ENCODE measurements at regions of chr11 and their contacts with region 1.

Region 1: GRCh38 chr11:4636962-4637661 is at the start of gene OR51D1:
- DNase-seq: peak; percentile 39 to 86 (median 69)
- H3K4me3 ChIP-seq: no peak within 1 kb of the TSS
- H3K27ac ChIP-seq: no peak within 1 kb of the TSS
- H3K4me1 ChIP-seq: no peaks in the 10 kb centered on the region
- H3K27me3 ChIP-seq: no peaks in the 10 kb centered on the region
- CTCF ChIP-seq: peak; percentile 57 to 88 (median 76)
- POLR2A ChIP-seq: no peak
- total RNA-seq, gene OR51D1: not detected

Region 2: GRCh38 chr11:3626308-3626951 is 1010.7 kb before region 1 on chr11:
- intact Hi-C with region 1: no loop called
- DNase-seq: peak; percentile 32 to 73 (median 64)
- H3K4me3 ChIP-seq: peak overlapping the region in 1 of 4 donors; percentile 15
- H3K27ac ChIP-seq: no peak overlapping the region
- H3K4me1 ChIP-seq: no peaks in the 10 kb centered on the region
- H3K27me3 ChIP-seq: no peaks in the 10 kb centered on the region
- CTCF ChIP-seq: no peak
- POLR2A ChIP-seq: no peak

Region 3: DNA sequence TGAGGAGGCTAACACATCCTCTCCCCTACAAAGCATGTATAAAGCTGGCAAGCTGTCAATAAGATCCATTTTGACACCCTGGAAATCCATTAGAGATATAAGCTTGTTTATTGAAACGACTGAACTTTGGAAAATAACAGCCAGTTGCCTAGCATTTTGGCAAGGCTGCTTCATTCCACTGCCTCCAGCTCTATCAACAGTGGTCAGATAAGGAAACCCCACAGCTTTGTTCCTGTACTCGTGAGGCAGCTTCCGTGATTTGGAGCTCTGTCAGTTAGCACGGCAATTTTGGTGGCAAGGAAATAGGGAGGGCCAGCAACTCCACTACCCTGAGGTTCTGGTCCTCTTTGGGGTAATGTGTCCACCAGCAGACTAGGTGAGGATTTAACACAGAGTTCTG is 213.9 kb after region 1 on chr11:
- intact Hi-C with region 1: no loop called
- DNase-seq: no peak
- H3K4me3 ChIP-seq: no peak overlapping the region
- H3K27ac ChIP-seq: no peak overlapping the region
- H3K4me1 ChIP-seq: no peaks in the 10 kb centered on the region
- H3K27me3 ChIP-seq: no peaks in the 10 kb centered on the region
- CTCF ChIP-seq: no peak
- POLR2A ChIP-seq: no peak

Region 4: GRCh38 chr11:5004424-5005274 is 367.5 kb after region 1 on chr11:
- intact Hi-C with region 1: loop called in 1 of 2 experiments (anchors 5 kb)
- DNase-seq: peak; percentile 34 to 75 (median 60)
- H3K4me3 ChIP-seq: no peak overlapping the region
- H3K27ac ChIP-seq: no peak overlapping the region
- H3K4me1 ChIP-seq: no peaks in the 10 kb centered on the region
- H3K27me3 ChIP-seq: no peaks in the 10 kb centered on the region
- CTCF ChIP-seq: peak; percentile 36 to 56 (median 48)
- POLR2A ChIP-seq: no peak

Measured in adrenal gland (tissue), 19 donors.